Common myeloid progenitor, CD34-positive (primary cell): ENCODE measurements at regions of chr7 and their contacts with region 1.

Region 1: DNA sequence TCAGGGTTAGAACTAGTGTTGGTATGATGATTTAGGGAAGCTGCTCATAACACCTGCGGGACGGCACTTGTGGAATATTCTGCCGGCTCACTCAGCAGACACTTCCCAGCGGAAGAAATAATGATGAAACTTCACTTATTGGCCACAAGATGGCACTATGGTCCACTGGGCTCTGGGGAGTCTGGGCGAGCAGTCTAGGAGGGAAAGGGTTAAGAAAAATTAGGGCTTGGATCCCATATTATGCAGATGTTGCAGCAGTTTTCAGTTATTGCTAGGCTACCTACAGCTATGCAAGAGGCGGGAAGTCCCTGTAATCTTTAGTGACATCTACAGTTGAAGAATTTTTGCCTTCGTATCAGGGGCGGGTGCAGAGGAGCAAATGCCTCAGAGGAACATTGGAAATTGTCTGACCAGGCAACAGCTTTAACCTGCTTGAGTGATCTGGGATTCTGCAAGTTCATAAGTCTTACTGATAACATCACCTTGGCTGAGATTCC is 238.7 kb upstream of the PRSS58 start:
- DNase-seq: peak; percentile 70 to 84 (median 83)
- H3K4me3 ChIP-seq: peak overlapping the region in 4 of 7 experiments; percentile 21 to 57 (median 36)
- H3K27ac ChIP-seq: peak overlapping the region; percentile 27 to 32
- H3K4me1 ChIP-seq: peaks cover 11 to 69% (median 52%) of the 10 kb centered on the region in 4 experiments
- H3K27me3 ChIP-seq: no peaks in the 10 kb centered on the region

Region 2: GRCh38 chr7:142508258-142508689 is 11.7 kb after region 1 on chr7:
- CTCF ChIA-PET with region 1: interaction called, 2,564 read pairs
- POLR2A ChIA-PET with region 1: interaction called, 3 read pairs
- DNase-seq: no peak
- H3K4me3 ChIP-seq: no peak overlapping the region
- H3K27ac ChIP-seq: no peak overlapping the region
- H3K4me1 ChIP-seq: peaks cover 0 to 6% (median 1%) of the 10 kb centered on the region in 4 experiments
- H3K27me3 ChIP-seq: no peaks in the 10 kb centered on the region